ENCODE measurements at regions of chr2 and their contacts with region 1.

Region 1: GRCh38 chr2:29075894-29076705 is 1.8 kb upstream of the PCARE start:
- DNase-seq: no peak
- ATAC-seq: no peak
- H3K4me3 ChIP-seq: no peak overlapping the region
- H3K27ac ChIP-seq: no peak overlapping the region
- H3K4me1 ChIP-seq: no peaks in the 10 kb centered on the region
- H3K27me3 ChIP-seq: peaks cover 6 to 39% of the 10 kb centered on the region in 2 experiments; a peak in 4 of 5 replicates
- CTCF ChIP-seq: no peak
- EP300 ChIP-seq: no peak
- POLR2A ChIP-seq: no peak
- RAD21 ChIP-seq: no peak

Region 2: DNA sequence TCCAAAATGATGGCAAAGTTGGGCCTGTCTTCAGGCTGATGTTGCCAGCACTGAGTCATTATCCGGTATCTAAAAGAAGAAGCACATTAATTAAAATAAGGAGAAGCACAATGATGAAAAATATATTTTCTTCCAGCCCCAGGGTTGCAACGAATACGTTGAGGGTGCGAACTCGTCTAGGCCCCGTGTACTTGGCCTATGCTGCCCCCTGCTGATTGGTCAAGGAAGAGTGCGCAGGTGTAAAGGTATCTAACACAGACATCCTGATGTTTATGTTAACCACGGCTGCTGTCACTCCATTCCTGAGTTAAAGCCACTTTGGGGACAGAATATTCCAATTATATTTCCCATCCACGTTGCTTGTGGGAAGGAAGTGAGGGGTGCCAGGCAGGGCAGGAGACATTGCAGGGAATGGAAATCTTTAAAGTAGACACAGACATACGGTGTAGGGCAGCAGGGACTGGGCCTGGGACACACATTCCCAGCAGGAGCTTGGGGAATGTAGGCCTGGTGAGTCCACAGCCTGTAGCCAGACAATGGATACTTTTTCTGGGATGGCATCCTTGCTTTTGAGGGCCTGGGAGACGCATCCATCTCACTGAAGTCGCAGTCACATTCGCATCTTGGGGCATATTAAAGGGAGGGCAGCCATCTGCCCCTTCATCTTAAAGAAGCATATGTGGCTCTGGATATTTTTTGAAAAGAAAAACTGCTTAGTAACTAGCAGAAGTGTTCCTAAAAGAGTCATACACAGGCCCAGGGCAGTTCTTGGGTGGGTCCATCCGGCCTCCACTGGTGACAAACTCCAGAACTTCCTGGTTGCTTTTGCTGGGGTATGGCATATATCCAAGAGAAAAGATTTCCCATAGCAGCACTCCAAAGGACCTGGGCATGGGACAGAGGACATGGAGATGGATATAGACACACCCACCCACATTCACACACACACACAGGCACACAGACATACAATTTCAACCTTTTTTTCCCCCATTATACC is 121.0 kb after region 1 on chr2:
- CTCF ChIA-PET with region 1: no interaction called
- POLR2A ChIA-PET with region 1: interaction called, 3 read pairs
- in situ Hi-C with region 1: no loop called
- intact Hi-C with region 1: loop called (anchors 10 kb)
- DNase-seq: peak; percentile 76 to 79 (median 77)
- ATAC-seq: peak; percentile 98
- H3K4me3 ChIP-seq: no peak overlapping the region
- H3K27ac ChIP-seq: no peak overlapping the region
- H3K4me1 ChIP-seq: no peaks in the 10 kb centered on the region
- H3K27me3 ChIP-seq: peaks cover 9 to 17% of the 10 kb centered on the region in 2 experiments; a peak in 4 of 5 replicates
- CTCF ChIP-seq: peak; percentile 85 to 89 (median 88)
- EP300 ChIP-seq: no peak
- POLR2A ChIP-seq: no peak
- RAD21 ChIP-seq: peak; percentile 92 to 95

Measured in K562 (cell line).